Breast epithelium (tissue), 4 donors: ENCODE measurements at regions of chr6 and their contacts with region 1.

Region 1: DNA sequence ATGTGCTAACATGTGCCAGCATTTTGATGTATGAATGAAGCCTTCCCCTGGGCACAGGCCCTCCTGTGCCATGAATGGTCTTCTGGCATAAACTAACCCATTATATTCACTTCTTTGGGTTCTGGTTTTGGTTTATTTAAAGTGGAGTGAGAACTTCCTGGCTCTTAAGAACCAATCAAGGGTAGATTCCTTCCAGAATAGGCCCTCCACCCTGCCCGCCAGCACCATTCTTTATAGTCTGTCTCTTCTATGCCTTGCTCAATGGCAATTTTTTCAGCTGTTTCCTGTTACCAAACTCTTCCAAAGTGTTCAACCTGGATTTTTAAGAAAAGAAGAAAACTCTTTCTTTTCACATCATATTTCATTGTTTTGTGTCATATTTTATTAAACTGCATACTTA is 44.1 kb downstream of the VEGFA start:
- DNase-seq: no peak
- H3K4me3 ChIP-seq: no peak overlapping the region
- H3K27ac ChIP-seq: no peak overlapping the region
- H3K4me1 ChIP-seq: no peaks in the 10 kb centered on the region
- H3K27me3 ChIP-seq: no peaks in the 10 kb centered on the region
- CTCF ChIP-seq: no peak
- POLR2A ChIP-seq: no peak

Region 2: DNA sequence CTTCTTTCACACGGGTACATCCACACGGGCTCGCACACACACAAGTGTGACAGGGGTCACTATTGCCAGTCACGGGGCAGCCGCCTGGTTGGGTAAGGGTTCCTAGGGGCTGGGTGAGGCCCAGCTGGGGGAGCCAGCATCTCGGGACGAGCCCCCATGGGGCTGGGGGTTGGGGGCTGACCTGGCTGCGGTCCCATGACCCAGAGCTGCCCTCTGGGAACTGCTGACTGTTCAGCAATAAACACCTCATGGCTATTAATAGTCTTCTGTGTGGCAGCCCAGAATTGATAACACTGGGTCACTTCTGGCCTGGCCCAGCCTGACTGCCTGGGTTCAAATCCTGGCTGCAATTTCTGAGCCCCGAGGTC is 20.3 kb before region 1 on chr6:
- intact Hi-C with region 1: loop called (anchors 1 kb)
- DNase-seq: no peak
- H3K4me3 ChIP-seq: no peak overlapping the region
- H3K27ac ChIP-seq: no peak overlapping the region
- H3K4me1 ChIP-seq: no peaks in the 10 kb centered on the region
- H3K27me3 ChIP-seq: no peaks in the 10 kb centered on the region
- CTCF ChIP-seq: no peak
- POLR2A ChIP-seq: no peak